ENCODE measurements at regions of chr7 and their contacts with region 1.

Region 1: DNA sequence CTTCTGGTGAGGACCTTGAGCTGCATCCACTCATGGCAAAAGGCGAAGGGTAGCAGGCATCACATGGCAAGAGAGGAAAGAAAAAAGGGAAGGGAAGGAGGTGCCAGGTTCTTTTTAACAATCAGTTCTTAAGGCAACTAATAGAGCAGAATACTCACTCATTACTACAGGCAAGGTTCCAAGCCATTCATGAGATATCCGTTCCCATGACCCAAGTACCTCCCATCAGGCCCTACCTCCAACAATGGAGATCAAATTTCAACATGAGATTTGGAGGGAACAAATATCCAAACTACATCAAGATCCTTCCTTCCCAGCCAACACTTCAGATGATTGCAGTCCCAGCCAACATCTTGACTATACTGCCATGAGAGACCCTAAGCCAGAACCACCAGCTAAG is 38.9 kb upstream of the YAE1 start:
- DNase-seq: no peak
- H3K4me3 ChIP-seq: no peak overlapping the region
- H3K27ac ChIP-seq: no peak overlapping the region
- H3K4me1 ChIP-seq: no peaks in the 10 kb centered on the region
- H3K27me3 ChIP-seq: peaks cover 30% of the 10 kb centered on the region; the same call in 1 of the 2 replicates
- CTCF ChIP-seq: no peak

Region 2: DNA sequence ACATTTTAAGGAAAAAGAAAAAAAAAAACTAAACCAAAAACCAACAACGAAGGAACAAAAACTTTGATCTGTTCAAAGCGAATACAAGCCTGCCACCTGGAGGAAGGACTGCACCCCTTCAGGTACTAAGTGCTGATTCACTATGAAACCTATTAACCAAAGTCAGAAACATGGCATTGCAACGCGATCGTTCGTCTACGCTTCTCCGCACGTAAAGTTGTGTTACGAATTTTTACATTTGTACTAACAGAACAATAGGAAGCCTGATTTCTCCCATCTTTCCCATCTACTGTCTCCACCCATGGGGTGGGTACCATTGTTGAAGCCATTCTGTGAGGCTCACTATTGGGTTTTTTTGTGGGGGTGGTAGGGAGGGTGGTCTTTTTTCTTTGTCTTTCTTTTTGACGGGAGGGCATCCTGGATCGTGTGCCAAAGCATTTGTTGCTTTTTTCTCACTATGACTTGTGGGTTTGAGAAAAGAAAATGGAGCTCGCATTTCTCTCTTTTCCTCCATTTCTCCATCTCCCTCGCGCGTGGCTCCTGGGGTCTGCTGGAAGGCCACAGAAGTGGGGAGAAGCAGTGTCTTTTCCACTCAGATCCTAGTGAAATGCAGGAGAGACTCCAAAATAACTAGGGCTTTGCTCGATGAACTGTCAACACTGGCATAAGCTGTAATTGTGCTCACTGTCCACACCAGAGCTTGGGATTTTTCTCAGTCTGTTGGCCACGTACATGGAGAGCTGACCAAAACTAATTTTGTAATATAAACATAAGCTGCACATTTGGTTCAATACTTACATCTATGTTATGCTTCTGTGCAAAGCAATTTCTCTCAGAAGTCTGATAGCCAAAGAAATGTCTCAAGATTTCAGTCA is 62.0 kb before region 1 on chr7:
- CTCF ChIA-PET with region 1: no interaction called
- POLR2A ChIA-PET with region 1: no interaction called
- intact Hi-C with region 1: loop called (anchors 5 kb)
- DNase-seq: peak; percentile 52 to 64
- H3K4me3 ChIP-seq: no peak overlapping the region
- H3K27ac ChIP-seq: no peak overlapping the region
- H3K4me1 ChIP-seq: no peaks in the 10 kb centered on the region
- H3K27me3 ChIP-seq: peaks cover 27% of the 10 kb centered on the region
- CTCF ChIP-seq: peak; percentile 93